ENCODE measurements at regions of chr9 and their contacts with region 1.

Region 1: GRCh38 chr9:125932017-125932416 is 184.8 kb downstream of the PBX3 start:
- DNase-seq: peak in 3 of 5 donors; percentile 35 to 42 (median 39)
- ATAC-seq: peak; percentile 56 to 70 (median 63)
- H3K4me3 ChIP-seq: no peak overlapping the region
- H3K27ac ChIP-seq: no peak overlapping the region
- H3K4me1 ChIP-seq: peaks cover 0 to 12% (median 0%) of the 10 kb centered on the region in 12 donors
- H3K27me3 ChIP-seq: no peaks in the 10 kb centered on the region
- CTCF ChIP-seq: no peak
- POLR2A ChIP-seq: no peak

Region 2: GRCh38 chr9:125878164-125878631 is 53.8 kb before region 1 on chr9:
- intact Hi-C with region 1: no loop called
- DNase-seq: no peak
- ATAC-seq: no peak
- H3K4me3 ChIP-seq: no peak overlapping the region
- H3K27ac ChIP-seq: peak overlapping the region in 1 of 12 donors; percentile 27
- H3K4me1 ChIP-seq: peaks cover 0 to 14% (median 0%) of the 10 kb centered on the region in 12 donors
- H3K27me3 ChIP-seq: no peaks in the 10 kb centered on the region
- CTCF ChIP-seq: no peak
- POLR2A ChIP-seq: no peak

Region 3: GRCh38 chr9:125988479-125989050 is 56.5 kb after region 1 on chr9:
- intact Hi-C with region 1: loop called in 1 of 10 experiments (anchors 5 kb)
- DNase-seq: no peak
- ATAC-seq: no peak
- H3K4me3 ChIP-seq: no peak overlapping the region
- H3K27ac ChIP-seq: no peak overlapping the region
- H3K4me1 ChIP-seq: no peaks in the 10 kb centered on the region
- H3K27me3 ChIP-seq: no peaks in the 10 kb centered on the region
- CTCF ChIP-seq: no peak
- POLR2A ChIP-seq: no peak